Activated B cell treated with CpG ODN at 0.5 μM for 24 hours (primary cell): ENCODE measurements at regions of chr5 and their contacts with region 1.

Region 1: DNA sequence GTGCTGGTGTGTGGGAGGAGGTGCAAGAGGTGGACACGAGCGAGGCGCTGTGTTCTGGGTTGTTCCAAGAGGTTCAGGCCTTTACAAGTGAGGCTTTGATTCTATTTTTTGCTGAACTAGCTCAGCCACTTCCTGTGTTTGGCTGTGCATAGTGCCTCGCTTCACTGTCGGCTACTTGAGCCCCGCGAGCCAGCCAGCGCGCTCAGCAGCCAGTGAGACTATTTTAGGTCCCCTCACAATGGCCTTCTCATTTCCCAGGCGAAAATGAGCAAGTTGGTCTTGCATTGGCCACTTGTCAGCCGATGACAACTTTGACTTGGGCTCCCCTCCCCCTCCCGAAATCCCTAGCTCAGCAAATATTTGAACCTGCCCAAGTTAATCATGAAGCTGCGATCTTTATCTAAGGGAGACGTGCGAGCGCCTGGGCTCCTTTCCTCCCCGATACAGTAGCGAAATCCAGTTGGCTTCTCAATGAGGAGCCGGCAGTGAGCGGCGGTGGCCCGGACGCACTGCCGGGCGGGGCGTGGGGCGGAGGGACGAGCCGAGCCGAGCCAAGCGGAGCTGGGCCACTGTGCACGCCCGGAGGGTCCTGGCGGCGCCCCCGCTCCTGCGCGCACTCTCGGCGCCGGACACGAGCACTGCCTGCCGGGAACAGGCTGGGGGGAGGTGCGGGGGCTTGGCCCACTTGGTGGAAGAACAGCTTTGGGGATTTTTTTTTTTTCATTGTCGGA is 72.6 kb downstream of the PIK3R1 start:
- DNase-seq: peak; percentile 41
- ATAC-seq: peak; percentile 75
- H3K4me3 Mint-ChIP-seq: peak overlapping the region; percentile 90
- H3K27ac Mint-ChIP-seq: peak overlapping the region; percentile 89
- H3K4me1 Mint-ChIP-seq: peaks cover 41% of the 10 kb centered on the region
- H3K27me3 Mint-ChIP-seq: no peaks in the 10 kb centered on the region
- CTCF ChIP-seq: no peak

Region 2: GRCh38 chr5:67246108-67246507 is 1042.0 kb before region 1 on chr5:
- CTCF ChIA-PET with region 1: interaction called, 17 read pairs
- POLR2A ChIA-PET with region 1: no interaction called
- intact Hi-C with region 1: no loop called
- DNase-seq: no peak
- ATAC-seq: no peak
- H3K4me3 Mint-ChIP-seq: no peak overlapping the region
- H3K27ac Mint-ChIP-seq: no peak overlapping the region
- H3K4me1 Mint-ChIP-seq: peaks cover 2% of the 10 kb centered on the region
- H3K27me3 Mint-ChIP-seq: no peaks in the 10 kb centered on the region
- CTCF ChIP-seq: peak; percentile 53

Region 3: GRCh38 chr5:68315679-68316271 is 27.6 kb after region 1 on chr5:
- CTCF ChIA-PET with region 1: interaction called, 3 read pairs
- POLR2A ChIA-PET with region 1: interaction called, 4 read pairs
- intact Hi-C with region 1: loop called (anchors 1 kb)
- DNase-seq: peak; percentile 26
- ATAC-seq: peak; percentile 99
- H3K4me3 Mint-ChIP-seq: no peak overlapping the region
- H3K27ac Mint-ChIP-seq: peak overlapping the region; percentile 54
- H3K4me1 Mint-ChIP-seq: peaks cover 10% of the 10 kb centered on the region
- H3K27me3 Mint-ChIP-seq: no peaks in the 10 kb centered on the region
- CTCF ChIP-seq: no peak

Region 4: GRCh38 chr5:68378204-68378824 is 90.2 kb after region 1 on chr5:
- CTCF ChIA-PET with region 1: no interaction called
- POLR2A ChIA-PET with region 1: no interaction called
- intact Hi-C with region 1: no loop called
- DNase-seq: no peak
- ATAC-seq: no peak
- H3K4me3 Mint-ChIP-seq: no peak overlapping the region
- H3K27ac Mint-ChIP-seq: no peak overlapping the region
- H3K4me1 Mint-ChIP-seq: peaks cover 33% of the 10 kb centered on the region
- H3K27me3 Mint-ChIP-seq: no peaks in the 10 kb centered on the region
- CTCF ChIP-seq: no peak

Region 5: DNA sequence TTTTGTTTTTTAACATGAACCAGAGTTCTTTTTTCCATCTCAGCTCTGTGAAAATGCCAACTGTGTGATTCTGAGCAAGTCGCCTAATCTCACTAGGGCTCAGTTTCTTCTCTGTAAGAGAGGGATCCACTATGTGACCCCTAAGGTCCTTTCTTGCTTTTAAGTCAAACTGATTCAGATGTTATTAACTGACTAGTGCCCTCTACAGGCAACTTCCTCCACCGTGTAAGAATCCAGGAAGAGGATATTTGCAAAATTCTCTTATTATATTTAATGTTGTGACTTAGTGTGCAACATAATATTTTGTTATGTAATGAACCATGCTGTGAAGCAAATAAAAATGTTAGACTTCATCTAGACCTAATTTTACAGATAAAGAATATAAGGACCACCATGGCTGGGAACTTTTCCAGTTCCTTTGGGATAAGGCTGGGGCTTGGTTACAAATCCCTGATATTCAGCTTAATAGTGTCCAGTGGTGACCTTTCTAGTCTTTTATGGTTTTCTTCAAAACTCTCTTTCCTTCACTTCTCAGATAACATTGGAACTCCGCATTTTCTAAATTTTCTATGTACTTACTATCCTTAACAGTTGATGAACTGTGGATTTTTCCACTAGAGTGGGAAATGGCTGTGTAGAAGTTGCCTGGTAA is 172.1 kb after region 1 on chr5:
- CTCF ChIA-PET with region 1: interaction called, 101 read pairs
- POLR2A ChIA-PET with region 1: interaction called, 3 read pairs
- intact Hi-C with region 1: loop called (anchors 1 kb)
- DNase-seq: no peak
- ATAC-seq: peak; percentile 56
- H3K4me3 Mint-ChIP-seq: no peak overlapping the region
- H3K27ac Mint-ChIP-seq: no peak overlapping the region
- H3K4me1 Mint-ChIP-seq: no peaks in the 10 kb centered on the region
- H3K27me3 Mint-ChIP-seq: no peaks in the 10 kb centered on the region
- CTCF ChIP-seq: peak; percentile 54

Region 6: DNA sequence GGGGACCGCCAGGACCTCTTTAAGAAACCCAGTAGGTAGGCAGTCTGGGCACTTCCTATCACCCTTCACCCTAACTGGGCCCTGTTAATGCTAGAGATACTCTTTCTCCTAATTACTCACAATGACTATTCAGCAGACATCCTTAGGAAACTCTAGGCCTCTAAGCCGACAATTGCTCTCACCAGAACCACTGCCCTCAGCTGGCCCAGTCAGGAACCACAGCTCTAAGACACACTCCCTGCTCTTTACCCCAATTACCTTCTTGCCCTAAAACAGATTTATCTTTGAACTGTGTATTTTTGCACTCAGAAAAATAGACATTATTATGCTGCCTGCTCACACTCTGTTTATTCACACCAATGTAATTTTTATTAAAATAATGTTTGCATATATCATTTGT is 373.1 kb after region 1 on chr5:
- CTCF ChIA-PET with region 1: interaction called, 11 read pairs
- POLR2A ChIA-PET with region 1: no interaction called
- intact Hi-C with region 1: loop called (anchors 1 kb)
- DNase-seq: no peak
- ATAC-seq: peak; percentile 50
- H3K4me3 Mint-ChIP-seq: no peak overlapping the region
- H3K27ac Mint-ChIP-seq: no peak overlapping the region
- H3K4me1 Mint-ChIP-seq: no peaks in the 10 kb centered on the region
- H3K27me3 Mint-ChIP-seq: no peaks in the 10 kb centered on the region
- CTCF ChIP-seq: no peak

Region 7: DNA sequence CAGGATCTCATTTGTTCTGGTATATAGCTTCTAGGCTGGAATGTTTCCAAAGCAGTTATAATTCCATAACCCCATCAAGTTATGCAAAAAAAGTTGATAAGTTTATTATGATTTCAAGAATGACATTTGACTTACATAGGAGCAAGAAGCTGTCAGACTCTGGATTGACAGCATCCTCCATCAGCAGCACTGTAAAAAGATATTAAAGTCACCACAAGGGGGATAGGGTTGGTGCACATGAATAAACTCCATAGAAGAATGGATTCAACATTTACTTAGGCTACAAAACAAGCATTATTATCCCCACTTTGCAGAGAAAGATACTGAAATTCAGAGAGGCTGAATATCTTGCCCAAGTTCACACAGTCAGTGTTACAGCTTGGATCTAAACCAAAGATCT is 596.7 kb after region 1 on chr5:
- CTCF ChIA-PET with region 1: no interaction called
- POLR2A ChIA-PET with region 1: no interaction called
- intact Hi-C with region 1: loop called (anchors 10 kb)
- DNase-seq: no peak
- ATAC-seq: no peak
- H3K4me3 Mint-ChIP-seq: no peak overlapping the region
- H3K27ac Mint-ChIP-seq: no peak overlapping the region
- H3K4me1 Mint-ChIP-seq: no peaks in the 10 kb centered on the region
- H3K27me3 Mint-ChIP-seq: peaks cover 2% of the 10 kb centered on the region
- CTCF ChIP-seq: no peak

Region 8: GRCh38 chr5:69007726-69008368 is 719.7 kb after region 1 on chr5:
- CTCF ChIA-PET with region 1: interaction called, 27 read pairs
- POLR2A ChIA-PET with region 1: no interaction called
- intact Hi-C with region 1: loop called (anchors 1 kb)
- DNase-seq: peak; percentile 52
- ATAC-seq: peak; percentile 77
- H3K4me3 Mint-ChIP-seq: no peak overlapping the region
- H3K27ac Mint-ChIP-seq: no peak overlapping the region
- H3K4me1 Mint-ChIP-seq: no peaks in the 10 kb centered on the region
- H3K27me3 Mint-ChIP-seq: peaks cover 37% of the 10 kb centered on the region
- CTCF ChIP-seq: peak; percentile 72